Naive thymus-derived CD4-positive, alpha-beta T cell (primary cell): ENCODE measurements at regions of chr11 and their contacts with region 1.

Region 1: GRCh38 chr11:130002846-130003716 is 446 bp upstream of the PRDM10 start:
- DNase-seq: peak; percentile 75 to 97 (median 94)
- ATAC-seq: peak; percentile 85
- H3K4me3 ChIP-seq: peak overlapping the region; percentile 76
- H3K4me3 Mint-ChIP-seq: peak overlapping the region; percentile 87 to 100 (median 99)
- H3K27ac ChIP-seq: peak overlapping the region; percentile 98
- H3K27ac Mint-ChIP-seq: peak overlapping the region; percentile 99 to 100 (median 100)
- H3K4me1 ChIP-seq: peaks cover 16 to 22% of the 10 kb centered on the region in 2 donors
- H3K4me1 Mint-ChIP-seq: peaks cover 21 to 48% (median 43%) of the 10 kb centered on the region in 7 donors
- H3K27me3 ChIP-seq: no peaks in the 10 kb centered on the region
- H3K27me3 Mint-ChIP-seq: peaks cover 0 to 8% (median 0%) of the 10 kb centered on the region in 5 donors

Region 2: GRCh38 chr11:129061466-129062194 is 941.5 kb before region 1 on chr11:
- CTCF ChIA-PET with region 1: no interaction called
- POLR2A ChIA-PET with region 1: no interaction called
- intact Hi-C with region 1: no loop called
- DNase-seq: no peak
- ATAC-seq: no peak
- H3K4me3 ChIP-seq: no peak overlapping the region
- H3K4me3 Mint-ChIP-seq: no peak overlapping the region
- H3K27ac ChIP-seq: no peak overlapping the region
- H3K27ac Mint-ChIP-seq: no peak overlapping the region
- H3K4me1 ChIP-seq: no peaks in the 10 kb centered on the region
- H3K4me1 Mint-ChIP-seq: peaks cover 0 to 4% (median 0%) of the 10 kb centered on the region in 7 donors
- H3K27me3 ChIP-seq: no peaks in the 10 kb centered on the region
- H3K27me3 Mint-ChIP-seq: no peaks in the 10 kb centered on the region

Region 3: GRCh38 chr11:129803533-129803932 is 199.5 kb before region 1 on chr11:
- CTCF ChIA-PET with region 1: no interaction called
- POLR2A ChIA-PET with region 1: interaction called, 12 read pairs
- intact Hi-C with region 1: no loop called
- DNase-seq: no peak
- ATAC-seq: no peak
- H3K4me3 ChIP-seq: no peak overlapping the region
- H3K4me3 Mint-ChIP-seq: peak overlapping the region; percentile 64 to 85 (median 78)
- H3K27ac ChIP-seq: peak overlapping the region; percentile 17
- H3K27ac Mint-ChIP-seq: peak overlapping the region; percentile 44 to 99 (median 91)
- H3K4me1 ChIP-seq: peaks cover 0 to 31% of the 10 kb centered on the region in 2 donors
- H3K4me1 Mint-ChIP-seq: peaks cover 25 to 90% (median 73%) of the 10 kb centered on the region in 7 donors
- H3K27me3 ChIP-seq: no peaks in the 10 kb centered on the region
- H3K27me3 Mint-ChIP-seq: peaks cover 0 to 37% (median 0%) of the 10 kb centered on the region in 5 donors

Region 4: GRCh38 chr11:129895126-129896041 is 107.7 kb before region 1 on chr11 and contains the start of gene NFRKB:
- CTCF ChIA-PET with region 1: interaction called, 3 read pairs
- POLR2A ChIA-PET with region 1: interaction called, 4 read pairs
- intact Hi-C with region 1: loop called (anchors 1 kb)
- DNase-seq: peak; percentile 75 to 95 (median 88)
- ATAC-seq: peak; percentile 99
- H3K4me3 ChIP-seq: peak within 1 kb of the TSS; percentile 76
- H3K4me3 Mint-ChIP-seq: peak within 1 kb of the TSS; percentile 86 to 96 (median 92)
- H3K27ac ChIP-seq: peak within 1 kb of the TSS; percentile 84
- H3K27ac Mint-ChIP-seq: peak within 1 kb of the TSS; percentile 82 to 95 (median 90)
- H3K4me1 ChIP-seq: peaks cover 9 to 18% of the 10 kb centered on the region in 2 donors
- H3K4me1 Mint-ChIP-seq: peaks cover 23 to 58% (median 44%) of the 10 kb centered on the region in 7 donors
- H3K27me3 ChIP-seq: no peaks in the 10 kb centered on the region
- H3K27me3 Mint-ChIP-seq: no peaks in the 10 kb centered on the region
- total RNA-seq, gene NFRKB: 40.4 to 81.3 (median 56.2) TPM

Region 5: GRCh38 chr11:130069684-130070108 is 66.6 kb after region 1 on chr11 and contains the start of gene APLP2:
- CTCF ChIA-PET with region 1: interaction called, 5 read pairs
- POLR2A ChIA-PET with region 1: interaction called, 55 read pairs
- intact Hi-C with region 1: loop called (anchors 1 kb)
- DNase-seq: peak; percentile 93 to 98 (median 95)
- ATAC-seq: peak; percentile 96
- H3K4me3 ChIP-seq: peak within 1 kb of the TSS; percentile 87
- H3K4me3 Mint-ChIP-seq: peak within 1 kb of the TSS; percentile 94 to 99 (median 96)
- H3K27ac ChIP-seq: peak within 1 kb of the TSS; percentile 89
- H3K27ac Mint-ChIP-seq: peak within 1 kb of the TSS; percentile 92 to 97 (median 95)
- H3K4me1 ChIP-seq: peaks cover 3 to 5% of the 10 kb centered on the region in 2 donors
- H3K4me1 Mint-ChIP-seq: peaks cover 19 to 33% (median 21%) of the 10 kb centered on the region in 7 donors
- H3K27me3 ChIP-seq: peaks cover 0 to 3% of the 10 kb centered on the region in 2 donors
- H3K27me3 Mint-ChIP-seq: peaks cover 0 to 29% (median 0%) of the 10 kb centered on the region in 5 donors
- total RNA-seq, gene APLP2: 26.6 to 172 (median 51.5) TPM

Region 6: DNA sequence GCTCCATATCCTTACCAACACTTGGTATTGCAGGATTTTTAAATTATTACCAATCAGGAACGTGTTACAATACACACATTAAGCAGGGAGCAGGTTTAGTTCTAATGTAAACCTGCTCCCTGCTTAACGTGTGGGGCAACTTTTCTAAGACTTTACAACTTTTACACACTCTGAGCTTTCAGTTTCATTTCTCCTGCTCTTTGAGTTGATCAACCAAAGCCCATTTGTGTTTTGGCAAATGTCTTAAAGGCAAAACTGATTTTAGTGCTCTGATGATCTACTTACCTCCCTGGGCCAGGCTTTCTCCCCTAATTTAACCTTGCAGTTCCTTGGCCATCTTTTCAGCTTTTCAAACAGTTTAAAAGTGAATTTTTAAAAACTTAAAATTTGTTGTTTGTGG is 240.7 kb after region 1 on chr11:
- CTCF ChIA-PET with region 1: no interaction called
- POLR2A ChIA-PET with region 1: no interaction called
- intact Hi-C with region 1: loop called in 1 of 2 experiments (anchors 1 kb)
- DNase-seq: peak in 1 of 9 donors; percentile 3
- ATAC-seq: no peak
- H3K4me3 ChIP-seq: no peak overlapping the region
- H3K4me3 Mint-ChIP-seq: peak overlapping the region in 2 of 10 donors; percentile 21 to 30
- H3K27ac ChIP-seq: no peak overlapping the region
- H3K27ac Mint-ChIP-seq: peak overlapping the region in 4 of 9 donors; percentile 32 to 84 (median 68)
- H3K4me1 ChIP-seq: peaks cover 0 to 4% of the 10 kb centered on the region in 2 donors
- H3K4me1 Mint-ChIP-seq: peaks cover 18 to 58% (median 49%) of the 10 kb centered on the region in 7 donors
- H3K27me3 ChIP-seq: no peaks in the 10 kb centered on the region
- H3K27me3 Mint-ChIP-seq: no peaks in the 10 kb centered on the region

Region 7: DNA sequence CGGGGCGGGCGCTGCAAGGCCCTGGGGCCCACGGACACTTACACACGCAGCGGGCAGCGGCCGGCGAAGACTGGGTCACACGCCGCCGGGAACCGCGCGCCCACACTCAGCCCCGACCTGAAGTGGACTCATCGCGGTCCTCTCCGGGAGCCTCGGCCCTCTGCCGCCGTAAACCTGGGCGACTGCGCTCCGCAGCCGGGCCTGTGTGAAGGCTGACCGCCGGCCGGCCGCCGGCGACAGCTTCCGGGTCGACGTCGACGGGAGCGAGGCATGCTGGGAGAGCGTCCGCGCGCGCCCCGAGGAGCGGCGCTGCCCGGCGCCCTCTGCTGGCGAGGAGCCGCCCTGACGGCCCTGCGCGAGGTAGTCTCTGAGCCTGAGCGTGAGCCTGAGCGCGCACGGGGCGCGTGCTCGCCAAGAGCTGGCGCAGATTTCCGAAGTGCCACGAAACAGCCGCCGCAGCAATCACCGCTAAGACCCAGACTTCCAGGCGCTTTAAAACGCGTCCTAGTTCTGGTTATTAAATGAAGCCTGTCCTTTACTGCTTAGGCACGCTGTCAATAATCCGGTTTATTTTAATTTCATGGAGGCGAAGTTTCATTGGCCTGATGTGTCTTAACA is 913.3 kb after region 1 on chr11 and contains the start of gene SNX19:
- CTCF ChIA-PET with region 1: no interaction called
- POLR2A ChIA-PET with region 1: interaction called, 7 read pairs
- intact Hi-C with region 1: loop called (anchors 1 to 2 kb)
- DNase-seq: peak; percentile 83 to 96 (median 89)
- ATAC-seq: peak; percentile 100
- H3K4me3 ChIP-seq: peak within 1 kb of the TSS; percentile 54
- H3K4me3 Mint-ChIP-seq: peak within 1 kb of the TSS; percentile 83 to 91 (median 88)
- H3K27ac ChIP-seq: peak within 1 kb of the TSS; percentile 84
- H3K27ac Mint-ChIP-seq: peak within 1 kb of the TSS; percentile 85 to 95 (median 92)
- H3K4me1 ChIP-seq: peaks cover 9 to 16% of the 10 kb centered on the region in 2 donors
- H3K4me1 Mint-ChIP-seq: peaks cover 5 to 53% (median 40%) of the 10 kb centered on the region in 7 donors
- H3K27me3 ChIP-seq: no peaks in the 10 kb centered on the region
- H3K27me3 Mint-ChIP-seq: peaks cover under 1 to 12% (median 10%) of the 10 kb centered on the region in 5 donors
- total RNA-seq, gene SNX19: 53.9 to 101 (median 57.1) TPM